ENCODE measurements at regions of chr7 and their contacts with region 1.

Region 1: DNA sequence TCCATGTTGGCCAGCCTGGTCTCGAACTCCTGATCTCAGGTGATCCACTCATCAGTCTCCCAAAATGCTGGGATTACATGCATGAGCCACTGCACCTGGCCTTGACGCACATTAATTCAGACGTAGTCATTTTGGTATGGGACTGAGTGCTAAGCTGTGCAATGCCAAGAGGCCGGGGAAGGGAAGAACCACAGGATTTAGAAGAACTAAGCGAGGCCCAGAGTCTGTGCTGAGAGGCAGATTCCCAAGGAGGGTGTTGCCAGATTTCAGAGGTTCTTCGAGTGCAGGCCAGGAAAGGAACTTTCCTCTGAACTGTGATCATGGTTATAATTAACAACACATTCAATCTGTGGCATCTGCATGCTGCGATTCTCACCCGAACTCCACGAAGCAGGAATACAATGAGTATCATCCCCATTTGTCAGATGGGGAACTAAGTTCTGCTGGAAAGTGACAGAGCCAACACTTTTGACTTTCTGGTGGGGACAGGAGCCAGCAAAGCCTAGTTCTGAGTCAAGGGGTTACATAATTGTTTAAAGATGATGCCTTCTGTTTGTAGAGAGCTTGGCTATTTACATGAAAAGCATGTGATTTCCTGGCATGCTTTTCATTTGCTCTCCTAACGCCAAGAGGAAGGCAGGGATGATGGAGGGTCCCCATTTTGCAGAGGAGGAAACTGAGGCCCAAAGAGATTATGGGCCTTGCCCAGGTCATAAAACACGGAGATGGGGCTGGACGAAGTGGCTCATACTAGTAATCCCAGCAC is 6.2 kb upstream of the ZAN start:
- DNase-seq: no peak

Region 2: DNA sequence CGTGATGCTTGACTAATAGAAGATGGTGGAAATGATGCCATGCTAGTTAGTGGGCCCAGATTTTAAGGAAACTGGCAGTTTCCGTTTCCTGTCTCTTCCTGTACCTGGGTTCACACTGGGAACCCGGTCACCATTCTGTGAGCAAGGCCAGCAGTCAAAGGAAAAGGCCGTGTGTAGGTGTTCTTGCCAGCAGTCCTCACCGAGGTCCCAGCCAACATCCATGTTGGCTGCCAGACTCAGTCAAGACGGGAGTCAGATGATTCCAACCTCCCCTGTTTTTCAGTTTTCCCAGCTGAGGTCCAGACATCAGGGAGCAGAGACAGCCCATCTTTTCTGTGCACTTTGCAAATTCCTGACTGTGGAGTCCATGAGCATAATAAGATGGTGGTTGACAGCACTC is 384.4 kb before region 1 on chr7:
- intact Hi-C with region 1: no loop called
- DNase-seq: peak in 1 of 10 donors; percentile 31

Region 3: GRCh38 chr7:100705753-100706671 is 21.2 kb before region 1 on chr7 and contains the start of gene POP7:
- intact Hi-C with region 1: loop called (anchors 2 kb)
- DNase-seq: peak; percentile 92 to 99 (median 96)

Measured in posterior cingulate gyrus (tissue), 11 donors.